Calu3 (cell line): ENCODE measurements at regions of chr1 and their contacts with region 1.

Region 1: GRCh38 chr1:45490626-45491486 is at the start of gene TESK2:
- DNase-seq: peak; percentile 98
- H3K4me3 Mint-ChIP-seq: no peak within 1 kb of the TSS
- H3K27ac Mint-ChIP-seq: no peak within 1 kb of the TSS
- H3K4me1 Mint-ChIP-seq: no peaks in the 10 kb centered on the region
- H3K27me3 Mint-ChIP-seq: no peaks in the 10 kb centered on the region
- CTCF ChIP-seq: no peak
- total RNA-seq, gene TESK2: 1.8 and 2.3 TPM in 2 replicates

Region 2: GRCh38 chr1:45339789-45340570 is 150.9 kb before region 1 on chr1 and contains the starts of genes MUTYH and TOE1:
- CTCF ChIA-PET with region 1: interaction called, 11 read pairs
- intact Hi-C with region 1: no loop called
- DNase-seq: peak; percentile 98
- H3K4me3 Mint-ChIP-seq: peak within 1 kb of the TSS; percentile 84
- H3K27ac Mint-ChIP-seq: peak within 1 kb of the TSS; percentile 75
- H3K4me1 Mint-ChIP-seq: peaks cover 38% of the 10 kb centered on the region
- H3K27me3 Mint-ChIP-seq: no peaks in the 10 kb centered on the region
- CTCF ChIP-seq: no peak
- total RNA-seq, gene MUTYH: 48.1 and 53.1 TPM in 2 replicates
- total RNA-seq, gene TOE1: 14.2 TPM in 2 replicates